ENCODE measurements at regions of chr13 and their contacts with region 1.

Region 1: DNA sequence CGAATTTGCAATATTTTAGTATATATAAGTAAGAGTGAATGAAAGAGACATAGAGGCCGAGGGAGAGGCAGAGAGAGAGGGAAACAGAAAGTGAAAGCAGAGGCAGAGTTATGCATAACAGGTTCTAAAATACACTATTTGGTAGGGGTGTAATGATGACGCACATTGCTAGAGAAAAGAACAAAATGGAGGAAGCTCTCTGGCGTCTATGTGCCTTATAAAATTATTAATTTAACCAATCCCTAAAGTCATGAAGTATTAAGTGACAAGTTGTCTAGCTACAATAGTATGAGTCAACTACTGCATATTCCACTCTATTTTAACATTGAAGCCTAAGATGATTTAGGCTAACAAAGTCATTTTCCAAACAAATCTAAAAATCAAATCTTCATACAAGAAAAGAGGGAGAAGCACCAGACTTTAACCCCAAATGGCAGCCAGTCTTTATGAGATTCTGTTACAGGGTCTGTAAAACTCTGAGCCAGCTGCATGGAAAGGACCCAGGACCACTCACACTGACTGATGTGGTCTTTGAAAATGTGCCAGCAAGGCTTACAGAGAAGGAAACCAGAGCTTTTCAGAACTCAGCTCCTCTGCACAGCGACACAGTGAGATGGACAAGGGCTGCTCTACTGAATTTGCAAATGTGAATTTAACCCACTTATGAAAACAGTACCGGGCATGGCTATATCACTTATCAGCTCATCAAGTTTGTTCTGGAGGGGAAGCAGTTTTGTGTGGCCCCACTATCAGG is 99.0 kb upstream of the SERP2 start:
- DNase-seq: peak; percentile 22
- H3K4me3 Mint-ChIP-seq: peak overlapping the region; percentile 56
- H3K27ac Mint-ChIP-seq: peak overlapping the region; percentile 85
- H3K4me1 Mint-ChIP-seq: peaks cover 60% of the 10 kb centered on the region
- H3K27me3 Mint-ChIP-seq: no peaks in the 10 kb centered on the region

Region 2: GRCh38 chr13:44293908-44294735 is 19.5 kb after region 1 on chr13:
- intact Hi-C with region 1: loop called (anchors 2 kb)
- DNase-seq: no peak
- H3K4me3 Mint-ChIP-seq: no peak overlapping the region
- H3K27ac Mint-ChIP-seq: peak overlapping the region; percentile 74
- H3K4me1 Mint-ChIP-seq: peaks cover 28% of the 10 kb centered on the region
- H3K27me3 Mint-ChIP-seq: peaks cover 6% of the 10 kb centered on the region

Measured in activated T-helper 1 cell treated with anti-CD3 and anti-CD28 coated beads, Interleukin-12 subunit alpha, Interleukin-12 subunit beta, Interleukin-2, Interleukin-4 antibody, amounts not matched to agents 30 ng/mL and 10 ng/mL and 1 ng/mL, durations not matched to agents 14 hours and 24 hours and 36 hours (primary cell).